ENCODE measurements at regions of chr1 and their contacts with region 1.

Region 1: GRCh38 chr1:206912445-206913095 is 9.2 kb downstream of the FCMR start:
- DNase-seq: peak; percentile 55
- H3K4me3 ChIP-seq: no peak overlapping the region
- H3K27ac ChIP-seq: no peak overlapping the region
- H3K27me3 ChIP-seq: peaks cover 14% of the 10 kb centered on the region
- CTCF ChIP-seq: peak; percentile 80

Region 2: DNA sequence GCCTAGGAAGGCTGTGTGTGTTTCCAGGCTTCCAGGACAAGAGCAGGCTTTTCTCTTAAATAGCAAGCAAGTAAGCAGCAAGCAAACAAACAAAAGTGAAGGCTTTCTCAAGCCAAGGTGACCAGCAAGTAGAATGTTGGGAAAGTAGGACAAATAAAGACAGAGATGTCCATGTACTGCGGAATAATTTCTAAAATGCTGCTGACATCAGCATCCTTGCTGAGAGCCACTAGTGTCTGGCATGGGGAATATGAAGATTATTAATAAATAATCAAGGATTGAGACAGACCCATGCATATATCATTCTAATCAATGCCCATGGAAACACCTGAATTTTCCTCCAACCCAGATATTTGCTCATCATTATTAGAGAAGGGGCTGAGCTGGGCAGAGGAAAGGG is 283.7 kb before region 1 on chr1:
- CTCF ChIA-PET with region 1: interaction called, 37 read pairs
- POLR2A ChIA-PET with region 1: no interaction called
- DNase-seq: no peak
- H3K4me3 ChIP-seq: no peak overlapping the region
- H3K27ac ChIP-seq: no peak overlapping the region
- H3K27me3 ChIP-seq: peaks cover 2% of the 10 kb centered on the region
- CTCF ChIP-seq: no peak

Region 3: DNA sequence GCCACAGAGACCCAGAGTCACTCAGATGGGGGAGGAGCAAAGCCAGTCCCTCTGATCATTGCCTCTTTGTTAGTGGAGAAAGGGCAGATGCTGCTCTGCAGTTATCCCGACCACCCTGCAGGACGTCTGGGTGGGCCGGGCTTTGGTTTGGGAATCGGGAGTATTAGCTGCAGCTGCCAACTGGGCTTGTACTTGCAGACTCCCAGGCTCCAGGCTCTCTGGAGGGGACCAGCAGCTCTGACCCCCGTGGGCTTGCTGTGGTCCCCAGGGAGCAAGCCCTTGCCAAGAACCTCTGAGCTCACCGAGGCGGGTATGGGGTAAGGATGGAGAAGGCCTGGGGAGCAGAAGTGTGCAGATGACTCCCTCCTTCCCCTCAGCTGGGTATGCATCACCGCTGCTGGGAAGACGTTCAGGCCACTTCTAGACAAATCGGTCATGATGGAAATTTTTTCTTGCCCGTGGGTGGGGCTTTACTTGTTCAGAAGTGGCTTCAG is 206.2 kb before region 1 on chr1:
- CTCF ChIA-PET with region 1: interaction called, 14 read pairs
- POLR2A ChIA-PET with region 1: no interaction called
- DNase-seq: peak; percentile 61
- H3K4me3 ChIP-seq: no peak overlapping the region
- H3K27ac ChIP-seq: no peak overlapping the region
- H3K27me3 ChIP-seq: no peaks in the 10 kb centered on the region
- CTCF ChIP-seq: no peak

Region 4: DNA sequence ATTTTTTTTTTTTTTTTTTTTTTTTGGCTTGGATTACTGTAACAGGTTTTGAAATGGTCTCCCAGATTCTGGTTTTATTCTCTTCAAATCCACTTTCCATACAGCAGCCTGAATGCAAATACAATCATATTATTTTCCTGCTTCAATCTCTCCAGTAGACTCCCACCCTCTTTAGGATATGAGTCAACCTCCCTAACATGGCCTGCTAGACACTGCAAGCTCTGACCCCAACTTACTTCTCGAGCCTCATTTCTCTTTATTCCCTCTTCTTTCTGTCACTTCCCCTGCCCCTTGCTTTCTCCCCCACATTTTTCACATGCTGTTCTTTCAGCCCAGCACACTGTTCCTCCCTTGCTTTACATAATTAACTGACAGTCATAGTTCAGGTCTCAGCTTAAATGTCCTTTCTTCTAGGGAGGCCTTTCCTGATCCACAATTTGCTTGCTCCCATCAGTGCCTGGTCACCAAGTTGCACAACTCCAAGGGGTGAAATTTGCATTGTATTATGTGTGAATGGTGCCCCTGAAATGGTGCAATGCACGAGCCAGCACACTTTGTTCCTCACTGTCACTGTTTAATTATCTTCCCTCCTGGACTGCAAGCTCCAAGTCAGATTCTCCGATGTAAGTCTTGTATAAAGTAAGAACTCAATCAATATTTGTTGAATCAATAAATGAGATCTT is 164.1 kb before region 1 on chr1:
- CTCF ChIA-PET with region 1: interaction called, 16 read pairs
- POLR2A ChIA-PET with region 1: no interaction called
- DNase-seq: no peak
- H3K4me3 ChIP-seq: no peak overlapping the region
- H3K27ac ChIP-seq: no peak overlapping the region
- H3K27me3 ChIP-seq: no peaks in the 10 kb centered on the region
- CTCF ChIP-seq: no peak

Region 5: GRCh38 chr1:206834711-206835110 is 77.9 kb before region 1 on chr1:
- CTCF ChIA-PET with region 1: interaction called, 16 read pairs
- POLR2A ChIA-PET with region 1: no interaction called
- DNase-seq: no peak
- H3K4me3 ChIP-seq: no peak overlapping the region
- H3K27ac ChIP-seq: no peak overlapping the region
- H3K27me3 ChIP-seq: no peaks in the 10 kb centered on the region
- CTCF ChIP-seq: no peak

Region 6: GRCh38 chr1:206895830-206896242 is 16.7 kb before region 1 on chr1:
- CTCF ChIA-PET with region 1: interaction called, 26 read pairs
- POLR2A ChIA-PET with region 1: interaction called, 5 read pairs
- DNase-seq: no peak
- H3K4me3 ChIP-seq: no peak overlapping the region
- H3K27ac ChIP-seq: peak overlapping the region; percentile 23
- H3K27me3 ChIP-seq: no peaks in the 10 kb centered on the region
- CTCF ChIP-seq: no peak

Region 7: DNA sequence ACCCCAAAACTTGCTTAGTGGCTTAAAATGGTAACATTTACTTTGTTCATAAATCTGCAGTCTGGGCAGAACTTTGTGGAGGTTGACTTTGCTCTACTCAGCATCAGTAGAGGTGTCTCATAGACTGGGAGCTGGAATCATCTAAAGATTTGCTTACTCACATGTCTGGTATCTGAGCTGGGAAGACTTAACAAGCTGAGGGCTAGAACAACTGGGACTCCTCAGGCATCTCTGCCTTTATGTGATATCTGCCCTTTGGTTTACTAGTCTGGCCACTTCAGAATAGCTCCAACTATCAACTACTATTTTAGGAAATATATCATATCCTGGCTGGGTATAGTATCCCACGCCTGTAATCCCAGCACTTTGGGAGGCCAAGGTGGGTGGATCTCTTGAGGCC is 273.9 kb after region 1 on chr1:
- CTCF ChIA-PET with region 1: no interaction called
- POLR2A ChIA-PET with region 1: no interaction called
- DNase-seq: no peak
- H3K4me3 ChIP-seq: no peak overlapping the region
- H3K27ac ChIP-seq: no peak overlapping the region
- H3K27me3 ChIP-seq: no peaks in the 10 kb centered on the region
- CTCF ChIP-seq: no peak

Region 8: GRCh38 chr1:207440626-207441025 is 528.1 kb after region 1 on chr1:
- CTCF ChIA-PET with region 1: no interaction called
- POLR2A ChIA-PET with region 1: no interaction called
- DNase-seq: no peak
- H3K4me3 ChIP-seq: no peak overlapping the region
- H3K27ac ChIP-seq: no peak overlapping the region
- H3K27me3 ChIP-seq: peaks cover 3% of the 10 kb centered on the region
- CTCF ChIP-seq: no peak